Activated T-helper 1 cell treated with anti-CD3 and anti-CD28 coated beads, Interleukin-12 subunit alpha, Interleukin-12 subunit beta, Interleukin-2, Interleukin-4 antibody, amounts not matched to agents 30 ng/mL and 10 ng/mL and 1 ng/mL, durations not matched to agents 14 hours and 24 hours and 36 hours (primary cell): ENCODE measurements at regions of chrX and their contacts with region 1.

Region 1: DNA sequence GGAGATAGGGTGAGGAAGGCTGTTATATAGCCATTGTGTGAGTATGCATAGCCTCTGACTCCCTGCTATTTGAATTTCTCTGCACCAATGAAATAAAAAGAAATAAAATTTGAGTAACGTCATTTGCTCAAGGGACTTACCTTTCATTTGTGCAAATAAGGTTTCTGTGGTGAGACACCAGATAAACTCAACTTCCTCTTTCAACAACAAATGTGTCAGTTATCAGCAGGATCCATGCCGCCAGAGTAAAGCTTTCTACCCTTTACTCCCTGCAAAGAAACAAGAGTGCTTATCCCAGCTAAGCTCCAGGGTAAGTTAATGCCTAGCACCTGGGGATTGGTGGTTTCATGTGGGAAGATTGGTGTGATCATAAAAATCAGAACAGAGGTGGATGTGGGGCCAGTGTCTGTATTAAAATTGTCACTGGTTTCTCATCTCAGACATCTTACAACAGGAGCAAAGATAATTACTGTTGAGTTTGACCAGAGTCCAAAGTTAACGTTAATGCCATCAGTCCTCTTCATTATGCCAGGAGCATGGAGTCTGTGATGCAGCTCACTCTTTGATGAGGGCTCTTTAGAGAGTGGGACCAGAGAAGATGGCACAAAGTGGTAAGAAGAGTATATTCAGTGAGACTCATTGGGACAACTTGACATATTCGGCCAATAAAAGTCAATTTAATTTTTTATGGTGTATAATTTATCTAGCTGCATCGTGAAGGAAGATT is at the start of gene P2RY10:
- DNase-seq: peak; percentile 6
- H3K4me3 Mint-ChIP-seq: peak within 1 kb of the TSS; percentile 98
- H3K27ac Mint-ChIP-seq: peak within 1 kb of the TSS; percentile 97
- H3K4me1 Mint-ChIP-seq: peaks cover 48% of the 10 kb centered on the region
- H3K27me3 Mint-ChIP-seq: no peaks in the 10 kb centered on the region
- total RNA-seq, gene P2RY10: 34.6 and 44.9 TPM in 2 replicates

Region 2: DNA sequence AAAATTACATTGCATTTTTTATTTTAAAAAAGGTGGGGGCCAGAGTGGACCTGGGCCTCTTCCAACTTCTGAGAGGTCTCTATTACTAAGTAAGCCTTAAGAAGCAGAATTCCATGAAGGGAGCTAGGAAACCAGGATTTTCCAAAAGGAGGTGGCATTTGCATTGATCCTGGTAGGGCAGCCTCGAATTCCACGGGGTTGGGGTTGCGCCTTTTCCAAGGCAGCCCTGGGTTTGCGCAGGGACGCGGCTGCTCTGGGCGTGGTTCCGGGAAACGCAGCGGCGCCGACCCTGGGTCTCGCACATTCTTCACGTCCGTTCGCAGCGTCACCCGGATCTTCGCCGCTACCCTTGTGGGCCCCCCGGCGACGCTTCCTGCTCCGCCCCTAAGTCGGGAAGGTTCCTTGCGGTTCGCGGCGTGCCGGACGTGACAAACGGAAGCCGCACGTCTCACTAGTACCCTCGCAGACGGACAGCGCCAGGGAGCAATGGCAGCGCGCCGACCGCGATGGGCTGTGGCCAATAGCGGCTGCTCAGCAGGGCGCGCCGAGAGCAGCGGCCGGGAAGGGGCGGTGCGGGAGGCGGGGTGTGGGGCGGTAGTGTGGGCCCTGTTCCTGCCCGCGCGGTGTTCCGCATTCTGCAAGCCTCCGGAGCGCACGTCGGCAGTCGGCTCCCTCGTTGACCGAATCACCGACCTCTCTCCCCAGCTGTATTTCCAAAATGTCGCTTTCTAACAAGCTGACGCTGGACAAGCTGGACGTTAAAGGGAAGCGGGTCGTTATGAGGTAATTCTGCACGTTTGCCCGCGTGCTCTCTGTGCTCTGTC is 841.5 kb before region 1 on chrX and contains the start of gene PGK1:
- intact Hi-C with region 1: loop called (anchors 10 kb)
- DNase-seq: peak; percentile 92
- H3K4me3 Mint-ChIP-seq: peak within 1 kb of the TSS; percentile 97
- H3K27ac Mint-ChIP-seq: peak within 1 kb of the TSS; percentile 91
- H3K4me1 Mint-ChIP-seq: peaks cover 51% of the 10 kb centered on the region
- H3K27me3 Mint-ChIP-seq: no peaks in the 10 kb centered on the region
- total RNA-seq, gene PGK1: 799 and 814 TPM in 2 replicates

Region 3: DNA sequence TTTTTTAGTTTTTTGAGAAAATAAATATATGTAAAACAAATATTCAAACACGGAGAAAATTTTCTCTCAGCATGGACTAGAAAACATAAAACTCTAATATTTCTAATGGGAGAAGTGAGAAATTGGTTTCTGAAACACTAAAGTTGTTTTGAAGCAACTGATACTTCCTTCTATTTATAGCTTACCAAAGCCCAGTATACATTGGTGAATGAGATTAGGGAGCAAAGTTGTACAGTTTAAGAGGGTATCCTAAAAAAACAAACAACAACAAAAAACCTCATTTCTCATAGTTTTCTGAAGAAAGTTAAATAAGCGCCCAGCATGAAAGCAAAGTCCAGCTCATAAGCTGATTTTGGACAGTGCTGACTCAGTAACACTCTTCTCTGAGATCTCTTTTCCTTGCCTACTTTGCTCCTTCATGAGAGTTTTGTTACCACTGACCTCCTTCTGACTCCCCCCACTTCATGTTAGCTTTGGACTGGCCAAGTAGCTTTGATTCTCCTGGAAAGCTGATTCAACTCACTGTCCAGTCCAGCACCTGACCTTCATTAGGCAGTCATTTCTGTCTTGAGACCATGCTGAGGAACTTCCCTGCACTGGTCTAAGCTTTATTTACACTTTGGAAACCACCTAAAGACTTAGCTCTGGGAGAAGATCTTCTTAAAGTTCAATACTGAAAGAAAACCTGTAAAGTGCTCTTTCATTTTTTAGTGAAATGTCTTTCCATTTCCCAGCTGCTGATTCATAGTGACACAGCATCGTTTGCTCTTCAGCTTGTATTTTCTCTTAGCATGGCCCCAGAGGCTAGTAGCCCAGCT is 21.9 kb before region 1 on chrX:
- intact Hi-C with region 1: loop called (anchors 1 kb)
- DNase-seq: no peak
- H3K4me3 Mint-ChIP-seq: peak overlapping the region; percentile 54
- H3K27ac Mint-ChIP-seq: peak overlapping the region; percentile 95
- H3K4me1 Mint-ChIP-seq: peaks cover 23% of the 10 kb centered on the region
- H3K27me3 Mint-ChIP-seq: no peaks in the 10 kb centered on the region

Region 4: GRCh38 chrX:79081895-79082512 is 136.7 kb after region 1 on chrX:
- intact Hi-C with region 1: loop called (anchors 5 kb)
- DNase-seq: peak; percentile 5
- H3K4me3 Mint-ChIP-seq: peak overlapping the region; percentile 59
- H3K27ac Mint-ChIP-seq: peak overlapping the region; percentile 70
- H3K4me1 Mint-ChIP-seq: peaks cover 39% of the 10 kb centered on the region
- H3K27me3 Mint-ChIP-seq: no peaks in the 10 kb centered on the region

Region 5: DNA sequence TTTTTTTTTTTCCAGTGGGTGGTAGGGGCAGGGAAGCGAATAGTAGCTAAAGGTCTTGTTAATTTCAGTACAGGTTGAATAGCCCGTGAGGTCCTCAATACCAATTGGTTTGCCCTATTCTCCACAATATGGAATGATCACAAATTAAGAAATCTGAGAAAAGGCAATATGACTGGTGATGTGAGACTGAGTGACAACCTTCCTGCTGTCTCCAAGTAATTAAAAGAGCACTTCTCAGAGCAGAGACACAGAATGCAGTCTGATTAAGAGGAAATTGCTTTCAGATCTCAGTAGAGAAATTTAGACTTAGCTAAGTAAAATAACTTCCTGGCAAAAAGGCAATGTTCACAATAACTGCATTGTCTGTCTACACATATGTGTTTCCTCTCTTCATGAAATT is 222.1 kb after region 1 on chrX:
- intact Hi-C with region 1: loop called (anchors 2 kb)
- DNase-seq: no peak
- H3K4me3 Mint-ChIP-seq: peak overlapping the region; percentile 74
- H3K27ac Mint-ChIP-seq: peak overlapping the region; percentile 81
- H3K4me1 Mint-ChIP-seq: peaks cover 70% of the 10 kb centered on the region
- H3K27me3 Mint-ChIP-seq: no peaks in the 10 kb centered on the region

Region 6: DNA sequence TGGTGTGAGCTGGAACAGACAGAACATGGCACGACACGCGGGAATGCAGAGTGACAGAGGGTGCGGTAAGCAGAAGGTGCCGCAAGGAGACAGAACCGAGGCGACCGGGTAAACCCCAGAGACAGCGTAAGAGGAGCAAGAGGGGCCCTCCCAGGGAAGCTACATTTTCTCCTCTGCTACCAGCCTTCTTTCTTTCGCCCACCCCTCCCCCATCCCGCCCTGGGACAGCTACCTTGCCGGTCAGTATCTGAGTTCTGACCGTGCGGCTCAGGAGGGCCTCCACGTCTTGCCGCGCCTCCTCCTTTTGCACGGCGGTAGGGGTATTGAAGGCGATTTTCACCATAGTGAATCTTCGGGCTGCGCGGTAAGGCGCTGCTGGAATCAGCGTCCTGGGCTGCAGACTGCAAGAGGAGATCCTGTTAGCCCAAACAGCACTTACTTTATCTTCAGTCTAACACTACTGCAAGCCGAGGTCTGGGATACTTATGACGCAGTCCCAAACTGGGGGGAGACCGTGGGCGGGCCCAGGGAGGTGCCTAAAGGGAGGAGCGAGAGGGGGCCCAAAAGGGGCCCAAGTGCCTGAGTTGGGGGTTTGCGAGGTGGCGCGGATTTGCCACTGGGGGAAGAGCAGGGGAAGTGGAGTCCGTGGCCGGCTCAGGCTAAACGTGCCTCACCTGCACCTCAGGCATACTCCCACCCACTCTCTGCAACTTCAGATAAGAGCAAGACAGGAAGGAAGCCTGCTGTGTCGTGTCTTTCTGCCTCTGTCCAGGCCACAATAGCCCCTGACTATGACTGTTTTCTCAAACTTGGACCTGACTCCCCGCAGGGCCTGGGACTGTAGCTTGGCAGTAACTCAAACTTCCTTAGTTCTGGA is 421.8 kb after region 1 on chrX and contains the start of gene ITM2A:
- intact Hi-C with region 1: loop called (anchors 5 kb)
- DNase-seq: peak; percentile 37
- H3K4me3 Mint-ChIP-seq: peak within 1 kb of the TSS; percentile 94
- H3K27ac Mint-ChIP-seq: peak within 1 kb of the TSS; percentile 95
- H3K4me1 Mint-ChIP-seq: peaks cover 35% of the 10 kb centered on the region
- H3K27me3 Mint-ChIP-seq: no peaks in the 10 kb centered on the region
- total RNA-seq, gene ITM2A: 114 and 116 TPM in 2 replicates